ENCODE measurements at regions of chr2 and their contacts with region 1.

Region 1: DNA sequence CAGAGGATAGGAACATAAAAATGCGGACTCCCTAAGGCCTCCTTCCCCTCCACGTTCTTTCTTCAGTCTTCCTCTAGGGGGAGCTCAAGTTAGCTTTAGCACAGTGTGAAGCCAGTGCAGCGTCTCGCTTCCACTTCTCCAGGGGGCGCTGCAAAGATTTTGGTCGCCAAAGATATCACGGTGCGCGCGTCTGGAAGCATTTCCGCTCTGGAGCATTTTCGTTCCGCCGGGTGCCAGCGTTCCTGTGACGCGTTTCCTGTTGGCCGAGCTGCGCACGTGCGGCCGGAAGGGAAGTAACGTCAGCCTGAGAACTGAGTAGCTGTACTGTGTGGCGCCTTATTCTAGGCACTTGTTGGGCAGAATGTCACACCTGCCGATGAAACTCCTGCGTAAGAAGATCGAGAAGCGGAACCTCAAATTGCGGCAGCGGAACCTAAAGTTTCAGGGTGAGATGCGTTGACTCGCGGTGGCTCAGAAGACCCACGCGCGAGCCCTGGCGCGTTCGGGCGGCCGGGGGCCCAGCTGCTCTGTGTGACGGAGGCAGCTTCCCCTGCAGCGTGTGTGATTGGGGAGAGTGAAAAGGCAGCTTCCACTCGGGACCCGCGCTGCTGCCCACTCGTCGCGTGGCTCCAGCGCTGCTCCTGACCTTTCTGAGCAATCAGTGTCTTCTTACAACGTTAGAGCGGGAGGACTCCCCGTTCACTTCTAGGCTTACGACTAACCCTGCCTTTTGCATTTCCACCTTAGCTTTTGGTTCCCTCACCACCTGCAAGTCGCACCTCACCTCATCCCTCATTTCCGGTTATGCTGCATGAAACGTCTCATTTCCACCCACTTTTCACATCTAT is at the start of gene DDX18:
- DNase-seq: peak; percentile 91 to 99 (median 99)
- ATAC-seq: peak; percentile 94
- H3K4me3 ChIP-seq: peak within 1 kb of the TSS; percentile 79
- H3K4me3 Mint-ChIP-seq: peak within 1 kb of the TSS; percentile 88 to 95 (median 93)
- H3K27ac ChIP-seq: peak within 1 kb of the TSS; percentile 96
- H3K27ac Mint-ChIP-seq: peak within 1 kb of the TSS; percentile 94 to 100 (median 98)
- H3K4me1 ChIP-seq: peaks cover 14 to 24% of the 10 kb centered on the region in 2 donors
- H3K4me1 Mint-ChIP-seq: peaks cover 26 to 59% (median 52%) of the 10 kb centered on the region in 7 donors
- H3K27me3 ChIP-seq: no peaks in the 10 kb centered on the region
- H3K27me3 Mint-ChIP-seq: peaks cover 0 to 8% (median 0%) of the 10 kb centered on the region in 5 donors
- total RNA-seq, gene DDX18: 86.9 to 133 (median 111) TPM

Region 2: DNA sequence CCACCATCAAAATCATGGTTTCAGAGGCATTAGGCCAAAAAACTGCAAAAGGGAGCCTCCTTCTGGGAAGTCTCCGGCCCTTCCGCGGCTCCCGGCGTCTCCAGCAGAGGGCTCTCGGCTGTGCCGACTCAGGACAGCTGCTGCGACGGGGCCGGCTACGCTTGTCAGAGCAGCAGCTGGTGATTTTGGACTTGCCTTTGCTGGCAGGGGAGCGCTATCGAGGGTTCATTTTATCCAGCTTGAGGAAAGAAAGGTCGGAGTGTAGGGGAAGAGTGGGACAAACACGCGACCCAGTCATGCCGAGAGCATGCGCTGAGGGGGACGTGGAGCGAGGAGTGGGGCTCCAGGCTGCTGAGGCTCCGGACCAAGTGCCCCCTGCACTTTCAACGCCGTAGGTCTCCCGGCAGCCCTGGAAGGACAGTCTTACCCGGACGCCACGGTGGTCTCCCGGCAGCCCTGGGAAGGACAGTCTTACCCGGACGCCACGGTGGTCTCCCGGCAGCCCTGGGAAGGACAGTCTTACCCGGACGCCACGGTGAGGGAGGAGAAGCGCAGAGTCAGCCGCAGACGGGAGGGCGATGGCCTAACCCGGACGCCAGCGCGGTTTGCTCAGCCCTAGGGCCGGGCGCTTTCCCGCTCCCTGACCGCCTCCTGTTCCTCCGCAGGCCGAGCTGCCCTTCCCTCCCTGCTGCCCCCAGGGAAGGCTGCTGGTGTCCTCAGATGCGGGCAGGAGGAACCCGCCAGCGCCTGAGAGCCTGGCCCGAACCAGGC is 21.5 kb after region 1 on chr2:
- CTCF ChIA-PET with region 1: interaction called, 4 read pairs
- POLR2A ChIA-PET with region 1: interaction called, 4 read pairs
- intact Hi-C with region 1: loop called in 1 of 2 experiments (anchors 2 kb)
- DNase-seq: peak; percentile 25 to 50 (median 35)
- ATAC-seq: peak; percentile 77
- H3K4me3 ChIP-seq: no peak overlapping the region
- H3K4me3 Mint-ChIP-seq: peak overlapping the region; percentile 63 to 91 (median 88)
- H3K27ac ChIP-seq: peak overlapping the region; percentile 15
- H3K27ac Mint-ChIP-seq: peak overlapping the region in 6 of 9 donors; percentile 53 to 97 (median 83)
- H3K4me1 ChIP-seq: no peaks in the 10 kb centered on the region
- H3K4me1 Mint-ChIP-seq: peaks cover 4 to 22% (median 20%) of the 10 kb centered on the region in 7 donors
- H3K27me3 ChIP-seq: no peaks in the 10 kb centered on the region
- H3K27me3 Mint-ChIP-seq: peaks cover 0 to 2% (median 0%) of the 10 kb centered on the region in 5 donors

Region 3: DNA sequence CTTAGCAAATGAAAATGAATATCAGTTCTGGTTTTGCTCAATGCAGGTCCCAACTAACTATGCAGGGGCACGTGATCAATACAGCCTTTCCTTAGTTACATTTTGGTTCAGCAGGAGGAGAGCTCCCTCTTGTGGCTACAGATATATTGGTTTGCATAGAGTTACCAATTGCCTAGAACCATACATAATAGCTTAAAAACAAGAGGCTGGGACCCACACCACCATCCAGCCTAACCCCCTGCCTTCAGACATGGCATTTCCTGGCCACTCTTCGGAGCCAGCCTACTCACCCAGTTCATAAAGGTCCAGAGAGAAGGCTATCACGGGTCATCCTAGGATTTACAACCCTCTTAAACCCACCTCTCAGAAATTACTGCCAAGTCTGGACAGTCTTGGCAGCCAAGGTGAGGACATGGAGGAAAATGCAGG is 188.8 kb after region 1 on chr2:
- CTCF ChIA-PET with region 1: interaction called, 9 read pairs
- POLR2A ChIA-PET with region 1: interaction called, 6 read pairs
- intact Hi-C with region 1: loop called (anchors 1 kb)
- DNase-seq: peak in 8 of 9 donors; percentile 26 to 77 (median 68)
- ATAC-seq: peak; percentile 99
- H3K4me3 ChIP-seq: no peak overlapping the region
- H3K4me3 Mint-ChIP-seq: no peak overlapping the region
- H3K27ac ChIP-seq: no peak overlapping the region
- H3K27ac Mint-ChIP-seq: peak overlapping the region in 7 of 9 donors; percentile 9 to 84 (median 59)
- H3K4me1 ChIP-seq: peaks cover 0 to 8% of the 10 kb centered on the region in 2 donors
- H3K4me1 Mint-ChIP-seq: peaks cover 11 to 35% (median 27%) of the 10 kb centered on the region in 7 donors
- H3K27me3 ChIP-seq: no peaks in the 10 kb centered on the region
- H3K27me3 Mint-ChIP-seq: no peaks in the 10 kb centered on the region

Region 4: DNA sequence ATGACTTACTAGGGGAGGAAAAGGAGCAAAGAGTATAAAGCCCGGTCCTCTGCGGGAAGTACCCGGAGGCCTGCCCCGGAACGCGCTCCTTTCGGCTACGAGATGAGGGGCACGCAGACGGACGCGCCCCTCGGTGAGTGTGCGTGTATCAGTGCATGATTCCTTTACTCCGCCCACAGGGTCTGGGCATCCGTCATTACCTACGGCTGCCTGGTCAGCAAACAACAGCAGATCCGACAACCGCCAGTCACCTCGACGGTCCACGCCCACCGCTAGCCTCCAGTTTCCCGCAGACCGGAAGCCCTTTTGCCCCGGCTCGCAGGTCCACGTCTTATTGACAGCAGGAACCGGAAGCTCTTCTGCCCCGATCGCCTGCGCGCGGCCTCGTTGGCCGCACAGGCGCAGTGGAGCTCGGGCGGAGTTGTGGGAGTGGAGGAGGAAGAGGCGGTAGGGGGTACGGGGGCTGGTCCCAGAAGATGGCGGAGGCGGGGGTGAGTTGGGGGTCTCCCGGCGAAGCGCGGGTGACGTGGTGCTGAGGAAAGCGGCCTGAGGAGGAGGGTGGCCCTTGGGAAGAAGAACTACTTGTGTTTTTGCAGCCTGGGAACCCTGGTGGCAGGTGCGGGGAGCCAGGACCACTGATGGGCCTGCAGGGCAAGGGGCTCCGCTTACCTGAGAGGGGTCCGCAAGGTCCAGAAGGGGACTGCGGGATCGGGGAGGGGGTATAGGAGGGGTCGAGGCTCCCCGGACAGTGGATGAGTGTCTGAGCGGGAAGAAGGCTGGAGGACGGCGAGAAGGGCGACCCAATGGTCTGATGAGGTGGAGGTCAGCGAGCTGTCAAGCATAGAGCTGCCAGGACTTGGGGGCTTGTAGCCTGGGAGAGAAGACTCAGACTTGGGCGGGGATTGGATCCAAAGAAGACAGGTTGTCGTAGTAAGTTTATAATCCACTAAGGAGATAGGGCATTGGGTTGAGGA is 273.7 kb after region 1 on chr2 and contains the start of gene INSIG2:
- CTCF ChIA-PET with region 1: interaction called, 7 read pairs
- POLR2A ChIA-PET with region 1: interaction called, 7 read pairs
- intact Hi-C with region 1: loop called (anchors 1 kb)
- DNase-seq: peak; percentile 77 to 92 (median 81)
- ATAC-seq: peak; percentile 93
- H3K4me3 ChIP-seq: peak within 1 kb of the TSS; percentile 92
- H3K4me3 Mint-ChIP-seq: peak within 1 kb of the TSS; percentile 63 to 96 (median 92)
- H3K27ac ChIP-seq: peak within 1 kb of the TSS; percentile 87
- H3K27ac Mint-ChIP-seq: peak within 1 kb of the TSS; percentile 70 to 97 (median 91)
- H3K4me1 ChIP-seq: peaks cover 0 to 7% of the 10 kb centered on the region in 2 donors
- H3K4me1 Mint-ChIP-seq: peaks cover 6 to 37% (median 24%) of the 10 kb centered on the region in 7 donors
- H3K27me3 ChIP-seq: no peaks in the 10 kb centered on the region
- H3K27me3 Mint-ChIP-seq: peaks cover 0 to 12% (median 0%) of the 10 kb centered on the region in 5 donors
- total RNA-seq, gene INSIG2: 8.5 to 31.5 (median 20.3) TPM

Region 5: DNA sequence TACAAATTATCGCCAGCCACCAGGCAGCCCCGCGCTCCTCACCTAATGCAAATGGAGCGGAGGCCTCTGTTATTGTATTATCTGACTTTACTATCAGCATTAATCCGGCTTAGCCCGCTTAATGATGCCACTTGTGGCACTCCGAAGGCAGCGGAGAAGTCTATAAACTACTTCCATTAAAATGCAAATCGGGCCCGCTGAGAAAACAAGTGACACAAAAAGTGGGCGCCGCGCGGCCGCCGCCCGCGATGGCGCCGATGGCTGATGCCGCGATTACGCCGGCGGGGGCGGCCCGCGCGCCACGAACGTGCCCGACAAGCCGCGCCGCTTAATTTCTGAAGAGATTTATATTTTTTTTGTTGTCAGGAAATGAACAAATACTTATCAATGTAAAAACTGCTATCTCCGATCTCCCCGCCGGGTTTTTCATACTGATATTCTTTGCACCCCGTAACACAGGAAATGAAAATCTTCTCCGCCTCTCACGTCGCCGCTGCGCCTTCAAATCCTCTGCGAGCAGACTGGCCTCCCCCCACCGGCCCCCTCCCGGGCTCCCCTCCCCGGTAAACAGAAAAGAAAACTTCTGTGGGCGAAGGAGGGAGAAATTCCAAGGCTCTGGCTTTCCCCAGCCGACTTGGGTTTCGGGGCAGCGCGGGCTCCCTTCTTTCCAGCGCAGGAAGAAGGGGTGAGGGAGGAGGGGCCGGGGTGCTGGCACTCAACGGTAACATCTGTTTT is 495.5 kb after region 1 on chr2:
- CTCF ChIA-PET with region 1: no interaction called
- POLR2A ChIA-PET with region 1: interaction called, 3 read pairs
- intact Hi-C with region 1: loop called (anchors 1 to 10 kb)
- DNase-seq: peak; percentile 51 to 82 (median 75)
- ATAC-seq: peak; percentile 81
- H3K4me3 ChIP-seq: peak overlapping the region; percentile 89
- H3K4me3 Mint-ChIP-seq: peak overlapping the region; percentile 81 to 95 (median 90)
- H3K27ac ChIP-seq: peak overlapping the region; percentile 89
- H3K27ac Mint-ChIP-seq: peak overlapping the region; percentile 87 to 99 (median 96)
- H3K4me1 ChIP-seq: peaks cover 10 to 12% of the 10 kb centered on the region in 2 donors
- H3K4me1 Mint-ChIP-seq: peaks cover 0 to 21% (median 9%) of the 10 kb centered on the region in 7 donors
- H3K27me3 ChIP-seq: no peaks in the 10 kb centered on the region
- H3K27me3 Mint-ChIP-seq: peaks cover 0 to 21% (median 0%) of the 10 kb centered on the region in 5 donors

Region 6: GRCh38 chr2:119678998-119679710 is 1864.5 kb after region 1 on chr2 and contains the start of gene TMEM177:
- CTCF ChIA-PET with region 1: interaction called, 4 read pairs
- POLR2A ChIA-PET with region 1: no interaction called
- intact Hi-C with region 1: loop called in 1 of 2 experiments (anchors 10 kb)
- DNase-seq: peak; percentile 72 to 96 (median 87)
- ATAC-seq: peak; percentile 91
- H3K4me3 ChIP-seq: peak within 1 kb of the TSS; percentile 95
- H3K4me3 Mint-ChIP-seq: peak within 1 kb of the TSS; percentile 87 to 96 (median 90)
- H3K27ac ChIP-seq: peak within 1 kb of the TSS; percentile 88
- H3K27ac Mint-ChIP-seq: peak within 1 kb of the TSS; percentile 58 to 99 (median 97)
- H3K4me1 ChIP-seq: peaks cover 0 to 15% of the 10 kb centered on the region in 2 donors
- H3K4me1 Mint-ChIP-seq: peaks cover 25 to 48% (median 38%) of the 10 kb centered on the region in 7 donors
- H3K27me3 ChIP-seq: no peaks in the 10 kb centered on the region
- H3K27me3 Mint-ChIP-seq: peaks cover 0 to 21% (median 0%) of the 10 kb centered on the region in 5 donors
- total RNA-seq, gene TMEM177: 5.5 to 38.1 (median 11.6) TPM

Measured in naive thymus-derived CD4-positive, alpha-beta T cell (primary cell).